ENCODE measurements at regions of chr12 and their contacts with region 1.

Region 1: GRCh38 chr12:120265473-120266179 is at the start of gene PXN:
- DNase-seq: peak; percentile 89 to 97 (median 95)
- ATAC-seq: peak; percentile 87 to 88
- H3K4me3 ChIP-seq: peak within 1 kb of the TSS; percentile 96
- H3K27ac ChIP-seq: peak within 1 kb of the TSS; percentile 95
- H3K4me1 ChIP-seq: peaks cover 12% of the 10 kb centered on the region
- H3K27me3 ChIP-seq: no peaks in the 10 kb centered on the region
- total RNA-seq, gene PXN: 67.8 to 89.8 (median 80.2) TPM

Region 2: DNA sequence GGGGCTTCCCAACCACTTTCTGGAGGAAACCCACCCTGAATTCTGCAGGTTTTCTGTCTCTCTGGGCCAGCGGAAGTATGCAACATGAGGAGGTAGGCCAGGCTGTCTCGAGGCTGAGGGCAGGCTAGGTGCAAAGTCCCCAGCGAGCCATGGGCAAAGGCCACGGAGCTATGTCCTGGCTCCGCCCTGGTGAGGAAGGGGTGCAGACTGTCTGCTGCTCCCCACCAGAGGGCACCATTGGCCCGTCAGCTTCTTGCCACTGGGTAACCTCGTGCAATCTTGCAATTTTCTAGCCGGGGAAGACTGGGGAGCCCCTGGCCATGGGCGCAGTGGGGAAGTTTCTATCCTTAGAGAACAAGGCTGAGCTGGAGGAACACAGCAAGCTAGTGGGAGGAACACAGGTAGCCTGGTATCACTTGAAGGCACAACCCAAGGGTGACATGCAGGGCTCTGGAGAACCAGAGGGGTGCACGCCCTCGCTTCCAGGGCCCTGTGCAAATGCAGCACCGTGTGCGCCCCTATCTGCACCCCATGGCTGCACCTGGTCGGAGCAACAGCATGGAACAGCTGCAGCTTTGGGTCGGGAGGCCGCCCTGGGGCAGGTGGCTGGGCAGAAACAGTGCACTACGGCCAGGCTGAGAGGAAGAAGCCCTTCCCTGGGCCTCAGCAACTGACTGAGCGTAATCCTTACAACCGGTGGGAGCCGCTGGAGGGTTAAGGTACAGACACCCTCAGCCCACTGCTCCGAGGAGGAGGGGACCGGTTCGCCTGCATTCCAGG is 37.1 kb before region 1 on chr12:
- intact Hi-C with region 1: loop called (anchors 1 to 2 kb)
- DNase-seq: peak; percentile 89 to 94 (median 94)
- ATAC-seq: peak; percentile 56 to 70
- H3K4me3 ChIP-seq: no peak overlapping the region
- H3K27ac ChIP-seq: peak overlapping the region; percentile 97
- H3K4me1 ChIP-seq: peaks cover 47% of the 10 kb centered on the region
- H3K27me3 ChIP-seq: no peaks in the 10 kb centered on the region

Region 3: GRCh38 chr12:120445911-120446843 is 180.6 kb after region 1 on chr12 and contains the starts of genes GATC and TRIAP1:
- intact Hi-C with region 1: no loop called
- DNase-seq: peak; percentile 84 to 94 (median 94)
- ATAC-seq: peak; percentile 97 to 98
- H3K4me3 ChIP-seq: peak within 1 kb of the TSS; percentile 84
- H3K27ac ChIP-seq: peak within 1 kb of the TSS; percentile 83
- H3K4me1 ChIP-seq: peaks cover 5% of the 10 kb centered on the region
- H3K27me3 ChIP-seq: no peaks in the 10 kb centered on the region
- total RNA-seq, gene GATC: 14.1 to 16.2 (median 15.5) TPM
- total RNA-seq, gene TRIAP1: 11.5 to 16.2 (median 12.8) TPM

Measured in right cardiac atrium (tissue), 5 donors.